Activated naive CD4-positive, alpha-beta T cell treated with anti-CD3 and anti-CD28 coated beads for 36 hours (primary cell): ENCODE measurements at regions of chr1 and their contacts with region 1.

Region 1: DNA sequence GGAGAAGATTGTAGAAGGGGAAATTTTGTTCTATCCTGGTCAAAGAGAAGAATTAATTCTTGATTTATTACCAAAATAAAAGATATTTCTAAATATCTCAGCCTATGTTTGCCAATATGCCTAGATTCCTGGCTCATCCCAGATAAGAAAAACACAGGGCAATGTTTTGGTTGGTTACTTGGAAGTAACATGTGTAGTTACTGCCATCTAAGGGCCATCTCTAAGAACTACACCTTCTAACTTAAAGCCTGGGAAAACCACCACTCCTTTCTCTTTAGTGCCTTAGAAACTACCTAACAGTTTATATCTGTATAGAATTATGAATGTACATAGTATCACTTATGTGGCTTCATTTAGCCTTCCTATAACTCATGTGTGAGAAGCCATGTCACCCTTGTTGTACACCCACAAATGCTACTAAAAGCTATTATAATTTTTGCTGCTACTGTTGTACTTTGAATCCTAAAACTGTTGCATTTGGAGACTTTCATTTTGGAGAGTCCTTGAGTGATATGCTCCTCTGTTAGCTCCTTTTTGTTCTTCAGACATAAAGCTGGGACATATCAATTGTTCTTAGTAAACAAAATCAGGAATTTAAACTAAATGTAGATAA is 4.5 kb downstream of the AIM2 start:
- DNase-seq: no peak
- H3K4me3 Mint-ChIP-seq: no peak overlapping the region
- H3K27ac Mint-ChIP-seq: no peak overlapping the region
- H3K4me1 Mint-ChIP-seq: peaks cover 34% of the 10 kb centered on the region
- H3K27me3 Mint-ChIP-seq: no peaks in the 10 kb centered on the region

Region 2: DNA sequence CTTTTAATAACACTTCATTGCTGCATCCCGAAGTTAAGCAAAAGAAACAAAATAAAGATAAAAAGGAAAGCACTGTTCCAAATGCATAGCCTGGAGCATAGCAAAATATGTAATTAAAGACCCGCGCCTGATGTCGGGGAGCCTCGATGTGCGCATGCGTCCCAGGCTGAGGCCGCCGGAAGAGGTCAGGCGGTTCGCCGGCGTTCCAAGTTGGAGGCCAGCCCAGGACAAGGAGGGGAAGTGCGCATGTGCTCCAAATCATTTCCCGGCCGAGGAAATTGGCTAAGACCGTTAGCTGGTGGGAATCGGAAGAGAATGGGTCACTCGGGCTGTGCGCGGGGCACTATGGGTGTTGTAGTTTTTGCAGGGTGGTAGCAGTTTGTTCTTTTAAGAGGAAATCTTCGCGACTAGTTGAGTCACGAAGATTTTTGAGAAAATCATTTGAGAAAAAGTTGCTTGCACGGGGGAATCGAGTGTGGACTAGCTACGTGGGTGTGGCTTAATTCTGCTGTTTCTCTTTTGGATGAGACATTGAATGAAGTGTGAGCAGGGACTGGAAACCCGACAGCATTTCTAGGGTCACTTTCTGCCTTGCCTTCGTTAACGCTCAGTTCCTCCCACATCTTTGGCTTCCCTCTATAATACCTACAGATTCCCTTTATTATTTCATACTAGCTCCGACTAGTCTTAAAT is 922.4 kb before region 1 on chr1:
- CTCF ChIA-PET with region 1: no interaction called
- intact Hi-C with region 1: loop called (anchors 10 kb)
- DNase-seq: peak; percentile 84
- H3K4me3 Mint-ChIP-seq: peak overlapping the region; percentile 77
- H3K27ac Mint-ChIP-seq: peak overlapping the region; percentile 77
- H3K4me1 Mint-ChIP-seq: peaks cover 19% of the 10 kb centered on the region
- H3K27me3 Mint-ChIP-seq: no peaks in the 10 kb centered on the region

Region 3: DNA sequence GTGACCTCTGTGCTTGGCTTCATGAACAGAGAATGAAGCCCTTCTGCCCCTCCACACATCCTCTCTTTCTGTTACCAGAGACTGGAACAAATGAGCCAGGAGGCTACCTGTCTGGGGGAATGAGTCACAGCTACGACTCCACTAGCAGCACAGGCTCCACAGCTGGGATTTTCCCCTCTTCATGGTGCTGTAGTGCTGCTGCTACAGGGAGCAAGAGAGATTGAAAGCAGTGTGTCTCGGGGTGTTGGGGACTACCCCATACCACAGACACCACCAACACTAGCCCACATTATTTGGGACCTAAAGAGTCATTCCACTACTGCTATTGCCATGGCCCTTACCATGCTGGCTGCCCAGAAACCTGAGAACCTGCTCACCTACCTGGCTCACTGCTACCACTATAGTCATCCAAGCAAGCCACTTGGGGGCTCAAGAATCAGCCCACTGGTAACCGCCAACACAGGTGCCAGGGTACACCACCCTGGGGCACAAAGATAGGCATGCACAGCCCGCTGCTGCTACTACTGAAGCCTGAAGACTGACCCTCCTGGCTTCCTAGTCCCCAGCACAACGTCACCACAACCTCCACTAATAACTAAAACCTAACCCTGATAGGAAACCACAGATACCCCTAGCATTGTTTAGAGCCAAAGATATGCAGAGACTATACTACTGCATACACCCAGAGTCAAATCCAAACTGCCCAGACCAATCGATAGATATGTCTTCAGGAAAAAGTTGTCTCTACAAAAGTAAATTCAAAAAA is 700.7 kb before region 1 on chr1:
- CTCF ChIA-PET with region 1: no interaction called
- intact Hi-C with region 1: loop called (anchors 10 kb)
- DNase-seq: peak; percentile 63
- H3K4me3 Mint-ChIP-seq: no peak overlapping the region
- H3K27ac Mint-ChIP-seq: no peak overlapping the region
- H3K4me1 Mint-ChIP-seq: peaks cover 2% of the 10 kb centered on the region
- H3K27me3 Mint-ChIP-seq: peaks cover 24% of the 10 kb centered on the region

Region 4: GRCh38 chr1:158654571-158654970 is 417.5 kb before region 1 on chr1:
- CTCF ChIA-PET with region 1: no interaction called
- intact Hi-C with region 1: loop called (anchors 10 kb)
- DNase-seq: no peak
- H3K4me3 Mint-ChIP-seq: no peak overlapping the region
- H3K27ac Mint-ChIP-seq: no peak overlapping the region
- H3K4me1 Mint-ChIP-seq: peaks cover 5% of the 10 kb centered on the region
- H3K27me3 Mint-ChIP-seq: peaks cover 3% of the 10 kb centered on the region

Region 5: GRCh38 chr1:158916085-158916484 is 156.0 kb before region 1 on chr1:
- CTCF ChIA-PET with region 1: no interaction called
- intact Hi-C with region 1: no loop called
- DNase-seq: no peak
- H3K4me3 Mint-ChIP-seq: no peak overlapping the region
- H3K27ac Mint-ChIP-seq: no peak overlapping the region
- H3K4me1 Mint-ChIP-seq: no peaks in the 10 kb centered on the region
- H3K27me3 Mint-ChIP-seq: peaks cover 2% of the 10 kb centered on the region

Region 6: DNA sequence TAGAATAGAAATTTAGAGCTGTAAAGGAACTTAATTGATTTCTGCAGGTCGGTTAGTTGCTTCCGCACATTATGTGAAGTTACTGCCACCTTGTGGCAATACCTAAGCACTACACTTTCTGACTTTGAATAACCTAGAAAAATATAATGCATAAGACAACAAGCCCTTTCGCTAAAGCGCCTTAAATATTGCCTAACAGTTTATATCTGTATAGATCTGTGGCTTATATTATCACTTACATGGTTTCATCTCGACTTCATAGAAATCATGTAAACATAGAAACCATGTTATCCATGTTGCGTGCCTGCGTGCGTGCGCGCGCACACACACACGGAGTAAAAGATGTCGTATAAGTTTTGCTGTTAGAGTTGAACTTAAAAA is 73.3 kb before region 1 on chr1:
- CTCF ChIA-PET with region 1: interaction called, 10 read pairs
- intact Hi-C with region 1: loop called (anchors 1 kb)
- DNase-seq: peak; percentile 60
- H3K4me3 Mint-ChIP-seq: no peak overlapping the region
- H3K27ac Mint-ChIP-seq: no peak overlapping the region
- H3K4me1 Mint-ChIP-seq: peaks cover 30% of the 10 kb centered on the region
- H3K27me3 Mint-ChIP-seq: no peaks in the 10 kb centered on the region

Region 7: GRCh38 chr1:159030877-159031447 is 41.1 kb before region 1 on chr1:
- CTCF ChIA-PET with region 1: interaction called, 11 read pairs
- intact Hi-C with region 1: no loop called
- DNase-seq: no peak
- H3K4me3 Mint-ChIP-seq: no peak overlapping the region
- H3K27ac Mint-ChIP-seq: no peak overlapping the region
- H3K4me1 Mint-ChIP-seq: peaks cover 48% of the 10 kb centered on the region
- H3K27me3 Mint-ChIP-seq: no peaks in the 10 kb centered on the region